Activated CD8-positive, alpha-beta T cell treated with anti-CD3 and anti-CD28 coated beads, Interleukin-2, amount 10 ng/mL, durations not matched to agents 7 days and 5 days (primary cell): ENCODE measurements at regions of chr7 and their contacts with region 1.

Region 1: GRCh38 chr7:43647673-43648472 is 65.0 kb downstream of the STK17A start:
- DNase-seq: peak; percentile 48
- ATAC-seq: peak; percentile 14
- H3K4me3 Mint-ChIP-seq: peak overlapping the region; percentile 71
- H3K27ac Mint-ChIP-seq: peak overlapping the region; percentile 89
- H3K4me1 Mint-ChIP-seq: peaks cover 95% of the 10 kb centered on the region
- H3K27me3 Mint-ChIP-seq: no peaks in the 10 kb centered on the region

Region 2: GRCh38 chr7:43535810-43536585 is 111.9 kb before region 1 on chr7:
- CTCF ChIA-PET with region 1: no interaction called
- POLR2A ChIA-PET with region 1: no interaction called
- DNase-seq: no peak
- ATAC-seq: no peak
- H3K4me3 Mint-ChIP-seq: no peak overlapping the region
- H3K27ac Mint-ChIP-seq: no peak overlapping the region
- H3K4me1 Mint-ChIP-seq: no peaks in the 10 kb centered on the region
- H3K27me3 Mint-ChIP-seq: peaks cover under 1% of the 10 kb centered on the region

Region 3: DNA sequence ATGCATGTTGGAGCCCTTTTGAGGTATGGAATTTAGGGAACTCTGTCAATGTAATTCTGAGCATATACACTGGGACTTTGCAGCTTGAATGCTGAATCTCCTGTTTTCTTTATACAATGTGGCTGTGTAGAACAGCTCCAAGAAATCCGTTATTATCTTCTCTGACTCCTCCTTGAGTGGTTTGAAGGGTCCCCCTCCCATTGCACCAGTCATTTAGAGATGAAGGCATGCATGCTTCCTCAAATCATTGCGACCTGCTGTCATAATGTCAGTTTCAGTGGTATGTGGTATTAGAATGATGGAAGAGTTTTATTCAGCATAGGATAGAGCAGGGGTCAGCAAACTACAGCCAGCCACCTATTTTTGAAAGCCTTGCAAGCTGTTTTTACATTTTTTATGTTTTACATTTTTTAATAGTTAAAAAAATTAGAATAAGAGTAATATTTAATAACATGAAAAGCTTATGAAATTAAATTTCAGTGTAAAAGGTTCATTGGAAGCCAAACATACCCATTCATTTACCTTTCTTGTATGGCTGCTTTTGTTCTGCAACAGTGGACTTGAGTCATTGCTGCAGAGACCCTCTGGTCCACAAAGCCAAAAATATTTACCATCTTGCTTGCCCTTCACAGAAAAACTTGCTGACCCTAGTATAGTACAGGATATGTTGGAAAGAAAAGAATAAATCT is 56.9 kb before region 1 on chr7:
- CTCF ChIA-PET with region 1: interaction called, 23 read pairs
- POLR2A ChIA-PET with region 1: interaction called, 142 read pairs
- DNase-seq: peak; percentile 56
- ATAC-seq: peak; percentile 29
- H3K4me3 Mint-ChIP-seq: peak overlapping the region; percentile 28
- H3K27ac Mint-ChIP-seq: peak overlapping the region; percentile 27
- H3K4me1 Mint-ChIP-seq: peaks cover 79% of the 10 kb centered on the region
- H3K27me3 Mint-ChIP-seq: no peaks in the 10 kb centered on the region

Region 4: GRCh38 chr7:43625453-43625852 is 22.4 kb before region 1 on chr7:
- CTCF ChIA-PET with region 1: interaction called, 16 read pairs
- POLR2A ChIA-PET with region 1: interaction called, 10 read pairs
- DNase-seq: peak; percentile 75
- ATAC-seq: peak; percentile 81
- H3K4me3 Mint-ChIP-seq: peak overlapping the region; percentile 22
- H3K27ac Mint-ChIP-seq: peak overlapping the region; percentile 73
- H3K4me1 Mint-ChIP-seq: peaks cover 84% of the 10 kb centered on the region
- H3K27me3 Mint-ChIP-seq: no peaks in the 10 kb centered on the region

Region 5: DNA sequence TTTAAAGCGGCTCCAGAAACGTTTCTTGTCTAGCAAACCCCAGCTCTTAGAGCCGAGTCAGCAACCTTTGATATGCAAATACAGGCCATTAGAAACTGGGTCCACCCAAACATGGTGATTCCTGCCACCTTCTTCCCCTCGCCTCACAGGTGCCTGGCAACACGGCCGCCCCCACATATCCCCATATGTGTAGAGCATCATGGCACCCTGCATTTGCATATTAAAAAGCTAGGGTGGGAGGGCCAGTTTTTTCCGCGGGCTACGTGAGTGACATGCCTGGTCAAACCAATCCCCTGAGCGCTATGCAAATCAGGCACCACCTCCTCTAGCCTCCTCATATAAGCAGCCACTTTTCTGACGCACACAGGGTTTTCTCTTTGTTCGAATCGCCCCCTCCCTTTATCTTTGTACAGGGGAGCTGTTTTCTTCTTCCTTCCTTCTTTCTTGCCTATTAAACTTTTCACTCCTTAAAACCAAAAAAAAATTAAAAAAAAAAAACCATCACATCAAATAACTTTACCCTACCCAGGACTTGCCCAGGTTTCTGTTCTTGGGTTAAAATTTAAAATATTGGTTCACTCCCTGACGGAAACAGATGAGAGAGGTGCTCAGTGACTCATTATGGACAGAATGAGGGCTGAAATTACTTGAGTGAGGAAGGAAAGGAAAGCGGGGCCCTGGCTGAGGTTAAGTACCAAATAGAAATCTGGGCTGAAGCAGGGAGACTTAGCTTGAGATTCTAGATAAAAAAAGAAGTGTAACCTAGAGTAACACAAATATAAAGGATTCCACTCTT is 21.6 kb after region 1 on chr7:
- CTCF ChIA-PET with region 1: interaction called, 22 read pairs
- POLR2A ChIA-PET with region 1: interaction called, 6 read pairs
- DNase-seq: peak; percentile 57
- ATAC-seq: peak; percentile 76
- H3K4me3 Mint-ChIP-seq: peak overlapping the region; percentile 30
- H3K27ac Mint-ChIP-seq: peak overlapping the region; percentile 61
- H3K4me1 Mint-ChIP-seq: peaks cover 49% of the 10 kb centered on the region
- H3K27me3 Mint-ChIP-seq: no peaks in the 10 kb centered on the region